Posterior vena cava (tissue), 2 donors: ENCODE measurements at regions of chr2 and their contacts with region 1.

Region 1: DNA sequence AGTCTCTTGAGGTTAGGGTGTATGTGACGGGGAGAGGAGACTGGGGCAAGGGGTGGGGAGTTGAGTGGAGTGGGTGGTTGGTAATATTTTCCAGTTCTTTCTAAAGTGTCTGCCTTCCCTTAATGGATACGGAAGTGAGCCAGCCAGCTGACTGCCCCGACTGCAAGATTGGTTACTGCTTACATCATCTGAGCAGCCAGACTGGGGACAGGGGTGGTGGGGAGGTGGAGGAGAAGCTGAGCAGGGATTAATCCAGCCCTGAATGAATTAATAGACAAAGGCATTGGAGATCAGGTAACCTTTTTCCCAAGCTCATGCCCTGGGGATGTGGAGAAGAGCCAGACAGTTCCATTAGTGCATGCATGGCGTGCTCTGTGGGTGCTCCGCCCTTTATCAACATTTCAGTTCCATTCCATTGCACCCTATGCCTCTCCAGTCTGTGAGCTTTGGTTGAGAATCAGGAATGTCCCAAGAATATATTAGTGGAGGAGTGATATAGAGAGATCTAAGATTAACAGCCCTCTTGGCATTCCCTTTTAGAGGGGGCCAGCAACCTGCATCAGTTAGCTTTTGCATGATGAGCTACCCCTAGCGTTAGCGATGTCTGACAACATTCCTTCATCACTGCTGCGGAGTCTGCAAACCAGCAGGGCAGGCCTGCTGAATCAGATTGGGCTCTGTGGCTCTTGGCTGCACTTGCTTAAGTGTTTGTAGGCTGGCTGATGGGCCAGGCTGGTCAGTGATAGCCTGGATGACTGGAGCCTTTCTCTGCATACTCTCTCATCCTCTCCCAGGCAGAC is 67.4 kb downstream of the TNP1 start:
- DNase-seq: peak; percentile 93

Region 2: GRCh38 chr2:216619411-216620393 is 172.7 kb before region 1 on chr2:
- intact Hi-C with region 1: no loop called
- DNase-seq: no peak

Region 3: GRCh38 chr2:216713691-216714336 is 78.6 kb before region 1 on chr2:
- intact Hi-C with region 1: loop called in 1 of 2 experiments (anchors 5 kb)
- DNase-seq: no peak

Region 4: GRCh38 chr2:216777650-216778273 is 14.7 kb before region 1 on chr2:
- intact Hi-C with region 1: no loop called
- DNase-seq: no peak

Region 5: DNA sequence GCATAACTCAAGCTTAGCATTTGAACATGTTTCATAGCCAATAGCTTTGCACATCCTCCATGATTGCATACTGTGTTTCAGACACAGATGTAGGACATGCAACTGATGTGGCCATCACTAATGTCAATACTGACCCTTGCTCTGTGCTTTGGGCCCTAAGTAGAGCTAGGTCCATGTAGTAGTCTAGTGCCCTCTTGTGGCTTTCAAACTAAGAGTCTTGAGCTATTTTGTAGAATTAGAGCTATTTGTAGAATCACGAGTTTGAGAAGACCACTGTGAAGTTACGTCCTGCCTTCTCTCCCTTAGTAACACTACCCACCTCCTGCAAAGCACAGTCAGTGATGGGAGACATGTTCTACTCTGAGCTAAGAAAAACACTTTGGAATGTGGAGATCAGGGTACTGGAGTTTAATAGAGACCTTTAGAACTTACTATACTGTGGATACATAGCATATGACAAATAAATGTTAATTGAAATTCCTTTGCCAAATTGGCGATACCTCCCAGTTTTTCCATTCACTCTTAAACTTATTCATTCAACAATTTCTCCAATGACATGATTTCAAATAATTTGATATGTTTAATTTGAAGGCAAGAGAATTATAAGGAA is 373.9 kb after region 1 on chr2:
- intact Hi-C with region 1: loop called in 1 of 2 experiments (anchors 10 kb)
- DNase-seq: no peak